B cell (primary cell): ENCODE measurements at regions of chr12 and their contacts with region 1.

Region 1: DNA sequence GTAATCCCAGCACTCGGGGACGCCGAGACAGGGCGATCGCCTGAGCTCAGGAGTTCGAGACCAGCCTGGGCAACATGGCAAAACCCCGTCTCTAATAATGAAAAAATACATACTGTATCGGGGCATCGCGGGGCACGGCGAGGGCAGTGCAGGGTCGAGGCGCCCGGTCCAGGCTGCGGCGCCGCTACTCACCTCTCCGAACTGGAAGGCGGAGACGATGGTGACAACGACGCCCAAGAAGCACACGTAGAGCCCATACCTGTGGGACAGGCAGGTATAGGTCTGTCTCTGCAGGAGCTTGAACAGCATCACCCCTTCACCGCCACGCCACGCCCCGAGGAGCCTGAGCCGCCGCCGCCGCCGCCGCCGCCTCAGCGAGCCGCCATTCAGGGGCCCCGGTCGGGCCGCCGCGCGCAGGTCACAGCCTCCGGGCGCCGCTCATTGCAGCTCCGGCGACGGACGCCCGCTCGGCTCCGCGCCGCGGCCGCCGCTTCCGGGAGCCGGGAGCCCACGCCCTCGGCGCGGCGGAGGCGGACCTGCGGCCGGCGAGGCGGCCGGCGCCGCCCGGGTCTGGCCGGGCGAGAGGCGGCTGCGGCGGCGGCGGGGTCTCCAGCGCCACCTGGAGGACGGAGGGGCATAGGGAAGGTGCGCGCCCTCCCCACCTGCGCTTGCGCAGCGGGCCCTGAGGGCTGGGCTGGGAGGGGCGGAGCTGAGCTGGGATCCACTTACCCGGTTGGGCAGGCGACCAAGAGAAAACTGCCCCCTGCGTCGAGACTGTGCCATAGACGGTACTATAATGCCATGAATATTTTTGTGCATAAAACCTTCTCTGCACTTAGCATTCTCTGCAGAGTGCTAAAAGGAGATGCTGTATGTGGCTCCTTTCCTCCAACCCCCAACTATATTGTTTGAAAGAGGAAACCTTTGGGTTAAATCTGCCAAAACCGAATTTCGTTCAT is at the start of gene GNPTAB:
- DNase-seq: peak; percentile 97
- ATAC-seq: peak; percentile 93
- H3K4me3 ChIP-seq: peak within 1 kb of the TSS; percentile 65 to 88 (median 82)
- H3K4me3 Mint-ChIP-seq: peak within 1 kb of the TSS; percentile 99
- H3K27ac ChIP-seq: peak within 1 kb of the TSS; percentile 67 to 75
- H3K27ac Mint-ChIP-seq: peak within 1 kb of the TSS; percentile 92
- H3K4me1 ChIP-seq: peaks cover 17 to 22% of the 10 kb centered on the region in 2 donors
- H3K4me1 Mint-ChIP-seq: peaks cover 33% of the 10 kb centered on the region
- H3K27me3 ChIP-seq: no peaks in the 10 kb centered on the region
- H3K27me3 Mint-ChIP-seq: no peaks in the 10 kb centered on the region
- CTCF ChIP-seq: peak; percentile 68
- total RNA-seq, gene GNPTAB: 78.8 and 79.4 TPM in 2 replicates

Region 2: GRCh38 chr12:101414533-101415119 is 416.0 kb before region 1 on chr12:
- CTCF ChIA-PET with region 1: interaction called, 16 read pairs
- POLR2A ChIA-PET with region 1: no interaction called
- intact Hi-C with region 1: loop called (anchors 2 kb)
- DNase-seq: peak; percentile 52
- ATAC-seq: no peak
- H3K4me3 ChIP-seq: no peak overlapping the region
- H3K4me3 Mint-ChIP-seq: no peak overlapping the region
- H3K27ac ChIP-seq: no peak overlapping the region
- H3K27ac Mint-ChIP-seq: no peak overlapping the region
- H3K4me1 ChIP-seq: no peaks in the 10 kb centered on the region
- H3K4me1 Mint-ChIP-seq: no peaks in the 10 kb centered on the region
- H3K27me3 ChIP-seq: peaks cover 0 to 3% (median 0%) of the 10 kb centered on the region in 4 experiments
- H3K27me3 Mint-ChIP-seq: peaks cover 5% of the 10 kb centered on the region
- CTCF ChIP-seq: peak; percentile 79

Region 3: DNA sequence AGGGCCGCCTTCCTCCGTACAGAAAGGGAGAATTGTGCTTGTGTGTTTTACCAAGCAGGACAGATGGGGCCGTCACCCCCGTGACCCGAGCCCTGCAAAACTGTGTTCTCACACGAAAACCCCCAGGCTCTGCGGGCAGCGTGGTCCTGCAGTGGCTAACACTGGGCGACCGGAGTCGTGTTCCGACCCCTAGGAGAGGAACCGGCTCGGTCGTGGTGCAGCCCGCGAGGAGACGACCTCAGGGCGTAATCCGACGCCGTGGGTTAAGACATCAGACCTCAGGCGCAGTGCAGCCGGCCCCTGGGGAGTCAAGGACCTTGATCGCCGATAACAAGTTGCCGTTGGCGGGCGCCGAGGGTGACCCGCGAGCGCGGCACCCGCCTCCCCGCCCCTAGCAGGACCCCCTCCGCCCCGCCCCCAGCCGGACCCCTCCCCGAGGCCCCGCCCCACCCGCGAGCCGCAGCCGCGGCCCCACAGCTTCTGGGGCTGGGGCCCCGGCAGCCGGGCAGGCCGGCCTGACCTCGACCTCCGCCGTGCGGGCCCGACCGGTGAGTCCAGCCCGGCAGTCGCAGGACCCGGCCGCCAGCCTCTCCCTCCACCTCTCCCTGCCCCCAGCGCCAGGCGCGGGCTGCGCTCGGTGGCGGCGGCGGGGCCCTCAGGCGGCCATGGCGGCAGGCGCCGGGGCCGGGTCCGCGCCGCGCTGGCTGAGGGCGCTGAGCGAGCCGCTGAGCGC is 133.3 kb before region 1 on chr12 and contains the start of gene CHPT1:
- CTCF ChIA-PET with region 1: no interaction called
- POLR2A ChIA-PET with region 1: no interaction called
- intact Hi-C with region 1: loop called (anchors 1 kb)
- DNase-seq: peak; percentile 87
- ATAC-seq: peak; percentile 79
- H3K4me3 ChIP-seq: peak within 1 kb of the TSS; percentile 75 to 90 (median 83)
- H3K4me3 Mint-ChIP-seq: peak within 1 kb of the TSS; percentile 99
- H3K27ac ChIP-seq: peak within 1 kb of the TSS; percentile 83 to 88
- H3K27ac Mint-ChIP-seq: peak within 1 kb of the TSS; percentile 98
- H3K4me1 ChIP-seq: peaks cover 26 to 31% of the 10 kb centered on the region in 2 donors
- H3K4me1 Mint-ChIP-seq: peaks cover 61% of the 10 kb centered on the region
- H3K27me3 ChIP-seq: no peaks in the 10 kb centered on the region
- H3K27me3 Mint-ChIP-seq: no peaks in the 10 kb centered on the region
- CTCF ChIP-seq: no peak
- total RNA-seq, gene CHPT1: 215 and 224 TPM in 2 replicates

Region 4: DNA sequence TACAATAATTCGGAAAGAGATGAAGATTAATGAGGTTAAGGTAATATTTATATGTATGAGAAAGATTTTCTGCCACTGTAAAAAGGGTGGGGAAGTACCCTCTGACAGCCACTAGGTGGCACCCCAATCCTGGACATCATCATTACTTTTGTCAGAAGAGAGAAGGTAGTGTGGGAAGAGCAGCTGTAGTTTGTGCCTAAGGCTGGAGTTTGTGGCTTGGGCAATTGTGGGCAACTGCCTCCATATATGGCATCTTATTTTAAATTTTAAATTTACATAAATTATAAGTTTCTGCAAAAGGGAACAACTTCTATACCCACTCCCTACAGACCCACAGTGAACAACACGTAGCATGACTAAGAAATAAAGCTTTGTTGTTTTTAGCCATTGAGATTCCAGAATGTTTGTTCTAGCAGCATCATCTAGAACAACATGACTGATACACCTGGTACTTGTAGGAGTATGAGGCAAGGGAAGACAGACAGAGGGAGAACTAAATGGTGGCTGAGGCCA is 56.9 kb before region 1 on chr12:
- CTCF ChIA-PET with region 1: interaction called, 61 read pairs
- POLR2A ChIA-PET with region 1: interaction called, 3 read pairs
- intact Hi-C with region 1: loop called (anchors 1 kb)
- DNase-seq: peak; percentile 77
- ATAC-seq: peak; percentile 86
- H3K4me3 ChIP-seq: no peak overlapping the region
- H3K4me3 Mint-ChIP-seq: no peak overlapping the region
- H3K27ac ChIP-seq: no peak overlapping the region
- H3K27ac Mint-ChIP-seq: no peak overlapping the region
- H3K4me1 ChIP-seq: no peaks in the 10 kb centered on the region
- H3K4me1 Mint-ChIP-seq: peaks cover 1% of the 10 kb centered on the region
- H3K27me3 ChIP-seq: no peaks in the 10 kb centered on the region
- H3K27me3 Mint-ChIP-seq: no peaks in the 10 kb centered on the region
- CTCF ChIP-seq: peak; percentile 98

Region 5: DNA sequence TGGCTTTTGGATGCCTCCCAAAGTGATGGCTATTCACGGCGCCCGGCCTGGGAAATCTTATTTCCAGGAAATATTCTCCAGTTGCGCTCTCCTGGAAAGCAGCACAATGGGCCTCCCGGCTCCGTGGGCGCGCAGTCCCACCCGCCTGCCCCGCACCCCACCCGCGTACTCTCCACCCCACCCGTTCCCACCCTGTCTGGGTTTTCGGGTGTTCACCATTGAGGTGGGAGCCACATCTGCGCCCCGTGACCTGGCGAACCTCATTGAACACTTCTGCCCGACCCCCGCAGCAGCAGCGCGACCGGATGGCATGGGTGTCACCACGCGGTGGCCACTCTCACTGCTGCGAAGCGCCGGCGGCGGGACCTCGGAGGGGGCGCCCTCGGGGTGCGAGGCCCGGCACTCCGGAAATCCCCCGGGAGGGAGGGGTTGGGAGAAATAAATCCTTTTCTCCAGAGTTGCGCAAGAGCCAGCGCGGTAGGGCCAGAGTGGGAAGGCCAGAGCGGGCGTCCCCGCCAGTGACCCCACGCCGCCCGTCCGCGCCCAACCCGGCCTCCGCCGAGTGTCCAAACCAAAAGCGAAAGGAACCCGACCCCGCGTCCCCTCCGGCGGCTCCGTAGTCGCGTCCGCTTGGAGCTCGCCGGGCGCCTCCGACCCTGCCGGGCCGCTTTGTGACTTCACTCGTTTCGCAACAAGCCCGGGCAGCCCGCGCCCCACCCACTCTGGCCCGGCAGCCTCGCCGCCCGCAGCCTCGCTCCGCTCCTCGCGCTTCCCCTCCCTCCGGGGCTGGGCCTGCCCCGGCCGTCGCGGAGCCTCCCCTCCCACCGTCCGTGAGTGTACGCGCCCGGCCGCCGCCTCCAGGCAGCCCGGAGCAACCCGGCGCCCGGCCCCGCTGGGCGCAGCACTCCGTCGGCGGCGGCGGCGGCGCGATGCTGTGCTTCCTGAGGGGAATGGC is 46.5 kb after region 1 on chr12 and contains the start of gene DRAM1:
- CTCF ChIA-PET with region 1: interaction called, 6 read pairs
- POLR2A ChIA-PET with region 1: no interaction called
- intact Hi-C with region 1: loop called (anchors 1 kb)
- DNase-seq: peak; percentile 90
- ATAC-seq: peak; percentile 87
- H3K4me3 ChIP-seq: peak within 1 kb of the TSS; percentile 80 to 92 (median 86)
- H3K4me3 Mint-ChIP-seq: peak within 1 kb of the TSS; percentile 90
- H3K27ac ChIP-seq: peak within 1 kb of the TSS; percentile 84 to 85
- H3K27ac Mint-ChIP-seq: peak within 1 kb of the TSS; percentile 88
- H3K4me1 ChIP-seq: peaks cover 6 to 14% of the 10 kb centered on the region in 2 donors
- H3K4me1 Mint-ChIP-seq: peaks cover 20% of the 10 kb centered on the region
- H3K27me3 ChIP-seq: no peaks in the 10 kb centered on the region
- H3K27me3 Mint-ChIP-seq: no peaks in the 10 kb centered on the region
- CTCF ChIP-seq: peak; percentile 25
- total RNA-seq, gene DRAM1: 7.9 and 10.2 TPM in 2 replicates